HEK293T (cell line): ENCODE measurements at regions of chr2 and their contacts with region 1.

Region 1: GRCh38 chr2:60550178-60550983 is 3.1 kb downstream of the BCL11A start:
- DNase-seq: peak; percentile 61

Region 2: DNA sequence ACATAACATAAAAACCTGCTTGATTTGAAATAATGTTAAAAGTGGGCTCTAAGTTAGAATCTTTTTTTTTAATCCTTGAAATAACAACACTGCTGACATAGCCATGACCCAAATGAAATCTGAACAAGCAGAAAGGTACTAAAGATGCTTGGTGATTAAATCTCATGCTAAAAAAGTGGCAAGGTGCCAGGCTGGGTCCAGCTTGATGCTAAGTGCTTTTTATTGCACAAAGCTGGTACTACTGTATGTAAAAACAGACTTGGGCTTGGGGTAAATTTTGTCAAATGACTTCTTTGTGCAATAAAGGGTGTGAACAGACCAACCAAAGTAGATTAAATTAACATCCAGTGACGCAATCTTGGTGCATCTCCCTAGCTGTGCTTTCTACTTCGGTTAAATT is 10.3 kb before region 1 on chr2:
- CTCF ChIA-PET with region 1: interaction called, 4 read pairs
- POLR2A ChIA-PET with region 1: interaction called, 11 read pairs
- DNase-seq: no peak

Region 3: GRCh38 chr2:60756191-60757041 is 206.0 kb after region 1 on chr2 and contains the start of gene PAPOLG:
- CTCF ChIA-PET with region 1: no interaction called
- POLR2A ChIA-PET with region 1: no interaction called
- DNase-seq: peak; percentile 98